Activated T-helper 2 cell treated with anti-CD3 and anti-CD28 coated beads, Interferon-gamma antibody, Interleukin-2, Interleukin-4, amounts not matched to agents 10 μg/mL and 5 μg/mL and 100 μg/mL, durations not matched to agents 14 hours and 24 hours and 36 hours (primary cell): ENCODE measurements at regions of chr3 and their contacts with region 1.

Region 1: DNA sequence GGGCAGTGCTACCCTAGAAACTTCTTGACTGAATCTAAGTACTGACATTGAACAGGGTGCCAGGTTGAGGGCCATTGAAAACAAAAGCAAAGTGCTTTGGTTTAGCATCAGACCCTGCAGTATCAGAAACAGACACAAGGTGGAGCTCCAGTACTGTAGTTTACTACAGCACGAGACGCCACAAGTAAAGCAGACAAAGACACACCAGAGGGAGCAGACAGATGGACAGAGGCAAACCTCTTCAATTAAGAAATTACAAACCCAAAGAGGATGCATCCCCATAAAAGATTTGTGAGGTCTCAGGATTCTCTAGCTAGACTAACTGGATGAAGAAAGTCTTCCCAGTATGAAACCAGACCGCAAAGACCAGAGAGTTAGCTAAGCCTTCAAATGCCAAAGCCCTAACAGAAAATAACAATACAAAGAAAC is 16.6 kb downstream of the TOP2B start:
- DNase-seq: peak; percentile 65
- H3K4me3 Mint-ChIP-seq: no peak overlapping the region
- H3K27ac Mint-ChIP-seq: no peak overlapping the region
- H3K4me1 Mint-ChIP-seq: peaks cover 29% of the 10 kb centered on the region
- H3K27me3 Mint-ChIP-seq: no peaks in the 10 kb centered on the region

Region 2: DNA sequence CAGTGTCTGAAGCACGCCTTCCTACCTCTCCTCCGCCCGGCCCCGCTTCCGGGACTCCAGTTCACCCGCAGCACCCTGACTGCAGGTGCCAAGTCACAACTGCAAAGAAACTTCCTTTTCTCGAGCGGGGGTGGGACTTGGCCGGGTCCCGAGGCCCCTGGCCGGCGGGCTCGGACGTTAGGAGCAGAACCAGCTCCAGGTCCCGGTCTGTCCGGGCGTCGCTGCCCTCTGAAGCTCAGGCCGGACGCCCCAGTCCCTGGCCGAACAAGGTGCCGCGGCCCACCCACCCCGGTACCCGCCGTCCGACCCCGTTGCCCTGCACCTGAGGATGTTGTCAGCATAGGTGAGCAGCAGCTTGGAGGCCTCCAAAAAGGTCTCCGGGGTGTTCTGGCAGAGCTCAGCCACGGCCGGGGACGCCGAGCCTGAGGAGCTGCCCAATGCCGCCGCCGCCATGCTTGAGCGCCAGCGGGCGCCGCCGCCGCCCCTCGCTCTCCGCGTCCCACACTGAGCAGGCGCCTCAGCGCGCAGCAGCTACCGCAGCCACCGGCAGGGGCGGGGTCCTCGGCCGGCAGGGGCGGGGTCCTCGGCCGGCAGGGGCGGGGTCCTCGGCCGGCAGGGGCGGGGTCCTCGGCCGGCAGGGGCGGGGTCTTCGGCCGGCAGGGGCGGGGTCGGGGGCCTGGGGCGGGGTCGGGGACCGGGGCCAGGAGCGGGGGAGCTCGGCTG is 135.0 kb after region 1 on chr3 and contains the start of gene NGLY1:
- intact Hi-C with region 1: loop called (anchors 5 kb)
- DNase-seq: peak; percentile 82
- H3K4me3 Mint-ChIP-seq: peak within 1 kb of the TSS; percentile 87
- H3K27ac Mint-ChIP-seq: peak within 1 kb of the TSS; percentile 83
- H3K4me1 Mint-ChIP-seq: peaks cover 54% of the 10 kb centered on the region
- H3K27me3 Mint-ChIP-seq: no peaks in the 10 kb centered on the region
- total RNA-seq, gene NGLY1: 71.6 and 78.8 TPM in 2 replicates

Region 3: GRCh38 chr3:25856902-25857518 is 208.9 kb after region 1 on chr3:
- intact Hi-C with region 1: loop called (anchors 1 kb)
- DNase-seq: no peak
- H3K4me3 Mint-ChIP-seq: no peak overlapping the region
- H3K27ac Mint-ChIP-seq: no peak overlapping the region
- H3K4me1 Mint-ChIP-seq: peaks cover 6% of the 10 kb centered on the region
- H3K27me3 Mint-ChIP-seq: no peaks in the 10 kb centered on the region

Region 4: GRCh38 chr3:25910997-25911396 is 262.9 kb after region 1 on chr3:
- intact Hi-C with region 1: loop called (anchors 2 kb)
- DNase-seq: no peak
- H3K4me3 Mint-ChIP-seq: no peak overlapping the region
- H3K27ac Mint-ChIP-seq: no peak overlapping the region
- H3K4me1 Mint-ChIP-seq: peaks cover 5% of the 10 kb centered on the region
- H3K27me3 Mint-ChIP-seq: peaks cover 3% of the 10 kb centered on the region

Region 5: DNA sequence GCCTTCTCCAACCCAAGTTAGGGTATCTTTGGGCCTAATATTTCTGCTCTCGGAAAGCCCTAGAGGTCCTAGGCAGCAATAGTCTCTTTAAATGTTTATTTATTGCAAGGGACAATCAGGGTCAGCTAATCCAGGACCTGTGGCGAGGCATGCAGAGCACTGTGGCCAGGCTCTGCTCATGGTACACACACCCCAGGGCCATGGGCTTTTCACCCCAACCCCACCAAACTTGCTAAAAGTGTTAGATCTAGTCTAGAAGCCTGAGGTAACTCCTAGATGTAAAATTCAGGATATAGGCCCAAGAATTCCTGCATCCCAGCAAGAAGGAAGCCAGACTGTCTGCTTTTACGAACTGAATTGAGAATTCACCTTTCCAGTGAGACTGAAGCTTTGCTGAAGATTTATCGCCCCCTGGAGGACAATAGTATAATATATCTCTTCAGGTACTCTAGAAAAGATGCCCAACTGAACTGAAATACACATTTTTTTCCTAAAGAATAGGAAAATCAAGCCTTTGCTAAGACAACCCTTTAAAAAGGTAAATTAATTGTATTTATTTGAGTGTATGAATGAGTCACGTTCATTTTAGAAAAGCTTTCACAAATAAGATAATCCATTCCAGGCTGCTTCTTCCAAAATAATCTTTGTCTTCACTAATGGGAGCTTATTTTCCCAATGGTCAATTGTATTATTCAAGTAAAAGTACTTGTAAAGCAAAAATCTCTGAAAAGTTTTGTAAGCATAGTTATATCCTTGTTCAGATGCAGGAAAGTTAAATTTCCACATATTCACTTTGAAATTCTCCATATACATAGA is 1064.3 kb after region 1 on chr3:
- intact Hi-C with region 1: loop called (anchors 2 kb)
- DNase-seq: no peak
- H3K4me3 Mint-ChIP-seq: no peak overlapping the region
- H3K27ac Mint-ChIP-seq: no peak overlapping the region
- H3K4me1 Mint-ChIP-seq: no peaks in the 10 kb centered on the region
- H3K27me3 Mint-ChIP-seq: no peaks in the 10 kb centered on the region